OCI-LY7 (cell line): ENCODE measurements at regions of chr14 and their contacts with region 1.

Region 1: DNA sequence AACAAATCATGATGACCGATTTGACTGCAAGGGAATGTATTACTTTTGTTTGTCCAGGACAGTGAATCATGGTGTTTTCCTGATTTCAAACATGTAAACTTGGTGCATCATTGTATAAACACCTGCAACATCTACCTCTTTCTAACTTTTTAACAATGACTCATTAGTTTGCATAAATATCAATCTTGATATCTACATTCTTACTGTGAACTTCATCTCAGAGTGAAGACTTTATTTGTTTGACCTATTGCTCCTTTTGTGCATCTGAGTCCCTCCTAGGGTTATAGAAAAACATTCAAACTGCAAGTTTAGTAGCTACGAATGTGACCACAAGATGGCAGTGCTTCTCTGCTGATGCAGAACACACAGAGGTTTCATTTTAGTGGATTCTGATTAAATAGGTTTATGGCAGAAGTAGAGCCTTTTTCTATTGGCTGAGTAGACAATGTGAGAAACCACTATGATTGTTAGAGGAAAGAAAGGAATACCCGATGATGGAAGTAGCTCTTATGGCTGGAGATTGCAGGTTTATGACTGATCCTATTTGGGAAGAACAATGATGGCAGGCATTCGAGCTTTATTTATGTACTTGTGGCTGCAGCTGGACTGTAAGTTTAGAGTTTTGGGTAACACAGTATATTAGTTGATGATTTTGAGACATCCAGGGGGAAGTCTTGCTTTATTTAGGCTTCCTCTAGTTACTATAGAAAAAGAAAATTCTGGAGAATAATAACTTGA is 244.2 kb upstream of the OR4E1 start:
- DNase-seq: peak; percentile 89
- H3K4me3 ChIP-seq: peak overlapping the region; percentile 56
- H3K27ac ChIP-seq: peak overlapping the region; percentile 21
- H3K4me1 ChIP-seq: peaks cover 47% of the 10 kb centered on the region
- CTCF ChIP-seq: peak; percentile 100

Region 2: GRCh38 chr14:21933681-21934080 is 15.8 kb after region 1 on chr14:
- CTCF ChIA-PET with region 1: interaction called, 9 read pairs
- POLR2A ChIA-PET with region 1: interaction called, 30 read pairs
- intact Hi-C with region 1: loop called (anchors 1 kb)
- DNase-seq: peak; percentile 62
- H3K4me3 ChIP-seq: no peak overlapping the region
- H3K27ac ChIP-seq: no peak overlapping the region
- H3K4me1 ChIP-seq: no peaks in the 10 kb centered on the region
- CTCF ChIP-seq: peak; percentile 91

Region 3: DNA sequence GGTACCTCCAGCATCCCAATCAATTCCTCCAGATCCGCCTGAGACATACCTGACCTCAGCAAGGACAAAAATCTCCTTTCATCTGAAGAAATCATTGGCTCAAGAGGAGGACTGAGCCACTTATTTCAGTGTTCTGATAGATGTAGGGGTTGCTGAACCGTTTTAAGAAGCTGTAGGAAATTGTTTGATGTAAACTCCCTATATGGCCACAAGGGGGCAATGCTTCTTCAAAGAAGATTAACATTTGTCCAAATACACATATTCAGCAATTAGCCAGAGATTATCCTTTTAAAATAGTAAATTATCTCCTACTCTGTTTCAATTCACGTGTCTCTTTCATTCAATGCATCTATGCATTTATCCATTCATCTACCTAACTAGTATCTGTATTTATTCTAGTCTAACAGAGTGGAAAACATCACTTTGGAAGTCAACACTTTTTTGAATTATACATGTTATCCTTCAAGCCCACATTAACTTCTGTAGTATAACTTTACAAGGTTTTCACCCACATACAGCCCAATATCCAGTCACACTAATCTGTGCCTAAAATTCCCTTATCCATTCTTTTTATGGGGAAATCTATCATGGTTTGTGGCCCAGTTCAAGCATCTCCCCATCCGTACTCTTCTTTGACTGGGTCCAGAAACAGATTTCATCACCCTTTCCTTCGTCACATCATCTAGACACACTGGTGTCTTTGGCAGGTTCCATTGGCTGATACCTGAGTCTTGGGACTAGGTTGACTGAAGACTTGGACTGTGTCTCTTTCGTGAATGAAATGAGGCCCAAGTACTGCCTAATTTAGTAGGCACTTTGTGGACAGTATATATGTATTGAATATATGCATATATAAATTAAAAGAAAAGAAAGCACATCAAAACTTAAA is 166.8 kb after region 1 on chr14:
- CTCF ChIA-PET with region 1: no interaction called
- POLR2A ChIA-PET with region 1: no interaction called
- intact Hi-C with region 1: loop called (anchors 5 kb)
- DNase-seq: peak; percentile 71
- H3K4me3 ChIP-seq: no peak overlapping the region
- H3K27ac ChIP-seq: no peak overlapping the region
- H3K4me1 ChIP-seq: no peaks in the 10 kb centered on the region
- CTCF ChIP-seq: peak; percentile 87

Region 4: DNA sequence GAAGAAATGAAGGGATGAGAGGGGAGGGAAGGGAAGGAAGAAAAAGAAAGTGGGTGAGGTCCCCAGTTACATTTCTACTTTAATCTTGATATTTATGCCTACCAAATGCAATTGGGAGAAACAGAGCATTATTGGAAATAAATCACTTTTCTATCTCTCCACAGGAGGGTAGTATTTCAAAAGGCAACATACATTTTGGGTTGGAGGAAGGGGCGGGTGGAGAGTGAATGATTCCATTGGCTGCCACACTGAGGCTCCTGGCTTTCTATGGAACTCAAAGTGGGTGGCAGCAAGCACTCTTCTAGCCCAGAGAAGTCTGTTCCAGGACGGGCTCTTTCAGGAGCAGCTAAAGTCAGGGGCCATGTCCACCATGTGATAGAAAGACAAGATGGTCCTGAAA is 229.8 kb after region 1 on chr14:
- CTCF ChIA-PET with region 1: no interaction called
- POLR2A ChIA-PET with region 1: no interaction called
- intact Hi-C with region 1: no loop called
- DNase-seq: no peak
- H3K4me3 ChIP-seq: no peak overlapping the region
- H3K27ac ChIP-seq: no peak overlapping the region
- H3K4me1 ChIP-seq: no peaks in the 10 kb centered on the region
- CTCF ChIP-seq: 0 out of 2 replicates have a peak, but pooled peaks have one; percentile 19

Region 5: GRCh38 chr14:22163051-22163450 is 245.2 kb after region 1 on chr14:
- CTCF ChIA-PET with region 1: no interaction called
- POLR2A ChIA-PET with region 1: no interaction called
- intact Hi-C with region 1: no loop called
- DNase-seq: peak; percentile 12
- H3K4me3 ChIP-seq: no peak overlapping the region
- H3K27ac ChIP-seq: no peak overlapping the region
- H3K4me1 ChIP-seq: no peaks in the 10 kb centered on the region
- CTCF ChIP-seq: peak; percentile 72